A673 (cell line): ENCODE measurements at regions of chr1 and their contacts with region 1.

Region 1: DNA sequence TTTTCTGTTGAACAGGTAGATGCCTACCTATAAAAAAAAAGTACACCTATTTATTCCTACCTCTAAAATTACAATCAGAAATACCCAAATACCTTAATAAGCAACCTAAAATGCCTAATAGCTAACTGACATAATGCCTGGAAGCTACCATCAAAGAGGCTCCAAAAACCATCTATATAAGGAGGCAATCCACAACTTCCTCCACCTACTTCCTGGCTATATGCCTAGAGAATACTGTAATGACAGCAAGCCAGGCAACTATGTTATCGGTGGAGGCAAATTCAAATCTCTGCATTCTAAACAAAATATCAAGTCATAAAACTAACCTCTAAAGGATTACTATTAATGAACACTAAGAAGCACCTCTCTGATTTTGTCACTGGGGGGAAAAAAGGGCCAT is 10.1 kb downstream of the ZNF644 start:
- DNase-seq: peak; percentile 37
- H3K4me3 ChIP-seq: no peak overlapping the region
- H3K27ac ChIP-seq: no peak overlapping the region
- H3K4me1 ChIP-seq: peaks cover 32% of the 10 kb centered on the region
- H3K27me3 ChIP-seq: no peaks in the 10 kb centered on the region
- CTCF ChIP-seq: no peak

Region 2: DNA sequence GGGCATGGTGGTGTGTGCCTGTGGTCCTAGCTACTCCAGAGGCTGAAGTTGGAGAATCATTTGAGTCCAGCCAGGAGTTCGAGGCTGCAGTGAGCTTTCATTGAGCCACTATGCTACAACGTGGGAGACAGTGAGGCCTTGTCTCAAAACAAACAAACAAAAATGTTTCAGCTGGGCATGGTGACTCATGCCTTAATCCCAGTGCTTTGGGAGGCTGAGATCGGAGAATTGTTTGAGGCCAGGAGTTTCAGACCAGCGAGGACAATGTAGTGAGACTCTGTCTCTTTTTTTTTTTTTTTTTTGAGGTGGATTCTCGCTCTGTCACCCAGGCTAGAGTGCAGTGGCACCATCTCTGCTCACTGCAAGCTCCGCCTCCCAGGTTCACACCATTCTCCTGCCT is 1815.1 kb after region 1 on chr1:
- CTCF ChIA-PET with region 1: no interaction called
- POLR2A ChIA-PET with region 1: interaction called, 10 read pairs
- intact Hi-C with region 1: no loop called
- DNase-seq: no peak
- H3K4me3 ChIP-seq: no peak overlapping the region
- H3K27ac ChIP-seq: no peak overlapping the region
- H3K4me1 ChIP-seq: peaks cover 4% of the 10 kb centered on the region
- H3K27me3 ChIP-seq: no peaks in the 10 kb centered on the region
- CTCF ChIP-seq: no peak